Activated naive CD4-positive, alpha-beta T cell treated with anti-CD3 and anti-CD28 coated beads for 36 hours (primary cell): ENCODE measurements at regions of chr3 and their contacts with region 1.

Region 1: DNA sequence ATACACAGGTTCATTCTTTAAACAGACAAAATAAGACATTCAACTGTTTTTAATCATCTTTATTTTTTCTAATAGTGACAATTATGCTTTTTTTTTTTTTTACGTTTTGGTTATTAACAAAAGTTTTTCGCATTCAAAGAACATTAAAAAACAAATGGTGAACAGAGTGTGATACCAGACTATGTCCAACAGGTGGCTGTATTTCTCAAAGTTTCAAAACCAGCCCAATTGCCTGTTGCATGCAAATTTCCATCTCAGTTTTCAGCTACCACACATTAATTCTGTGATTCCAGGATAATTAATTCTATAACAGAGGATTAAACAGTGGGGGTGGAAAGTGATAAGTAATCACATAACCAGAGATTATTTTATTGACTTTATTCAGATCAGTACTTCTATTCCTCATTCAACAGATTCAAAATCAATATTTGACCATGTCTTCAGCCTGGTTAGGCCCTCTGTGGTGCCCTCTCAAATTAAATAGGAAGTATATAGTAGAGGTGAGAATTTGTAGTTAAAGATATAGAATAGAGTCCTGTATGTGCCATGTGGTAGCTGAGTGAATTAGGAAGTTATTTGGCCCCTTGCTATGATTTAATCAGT is 122.2 kb upstream of the DCBLD2 start:
- DNase-seq: no peak
- H3K4me3 Mint-ChIP-seq: no peak overlapping the region
- H3K27ac Mint-ChIP-seq: no peak overlapping the region
- H3K4me1 Mint-ChIP-seq: no peaks in the 10 kb centered on the region
- H3K27me3 Mint-ChIP-seq: no peaks in the 10 kb centered on the region

Region 2: GRCh38 chr3:99172736-99173657 is 149.3 kb after region 1 on chr3:
- CTCF ChIA-PET with region 1: interaction called, 5 read pairs
- intact Hi-C with region 1: loop called (anchors 1 kb)
- DNase-seq: peak; percentile 59
- H3K4me3 Mint-ChIP-seq: no peak overlapping the region
- H3K27ac Mint-ChIP-seq: no peak overlapping the region
- H3K4me1 Mint-ChIP-seq: no peaks in the 10 kb centered on the region
- H3K27me3 Mint-ChIP-seq: peaks cover 2% of the 10 kb centered on the region

Region 3: DNA sequence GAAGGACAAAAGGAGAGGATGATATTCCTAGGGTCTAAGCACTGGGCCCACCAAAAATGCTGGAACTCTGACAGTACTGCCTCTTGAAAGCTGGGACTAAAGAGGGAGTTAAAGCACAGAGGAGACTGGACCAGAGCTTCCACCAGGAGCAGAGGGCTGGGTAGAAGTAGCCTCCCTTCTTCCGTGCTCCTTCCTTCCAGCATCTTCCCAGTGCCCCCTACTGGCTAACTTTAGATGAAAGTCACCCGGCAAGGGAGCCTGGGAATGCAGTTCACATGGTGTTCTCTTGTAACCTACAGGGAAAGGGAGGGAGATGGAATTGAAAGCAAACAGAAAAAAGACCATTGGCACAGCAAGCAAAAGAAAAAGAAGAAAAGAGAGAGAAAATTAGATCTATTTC is 508.6 kb after region 1 on chr3:
- CTCF ChIA-PET with region 1: no interaction called
- intact Hi-C with region 1: loop called (anchors 5 kb)
- DNase-seq: peak; percentile 27
- H3K4me3 Mint-ChIP-seq: no peak overlapping the region
- H3K27ac Mint-ChIP-seq: no peak overlapping the region
- H3K4me1 Mint-ChIP-seq: no peaks in the 10 kb centered on the region
- H3K27me3 Mint-ChIP-seq: peaks cover 3% of the 10 kb centered on the region

Region 4: GRCh38 chr3:99686955-99687612 is 663.4 kb after region 1 on chr3:
- CTCF ChIA-PET with region 1: interaction called, 5 read pairs
- intact Hi-C with region 1: loop called (anchors 1 kb)
- DNase-seq: peak; percentile 71
- H3K4me3 Mint-ChIP-seq: no peak overlapping the region
- H3K27ac Mint-ChIP-seq: no peak overlapping the region
- H3K4me1 Mint-ChIP-seq: no peaks in the 10 kb centered on the region
- H3K27me3 Mint-ChIP-seq: peaks cover 10% of the 10 kb centered on the region

Region 5: GRCh38 chr3:99753268-99753975 is 729.7 kb after region 1 on chr3:
- CTCF ChIA-PET with region 1: interaction called, 6 read pairs
- intact Hi-C with region 1: loop called (anchors 1 kb)
- DNase-seq: peak; percentile 28
- H3K4me3 Mint-ChIP-seq: no peak overlapping the region
- H3K27ac Mint-ChIP-seq: no peak overlapping the region
- H3K4me1 Mint-ChIP-seq: no peaks in the 10 kb centered on the region
- H3K27me3 Mint-ChIP-seq: peaks cover 4% of the 10 kb centered on the region

Region 6: GRCh38 chr3:99789011-99789721 is 765.5 kb after region 1 on chr3:
- CTCF ChIA-PET with region 1: no interaction called
- intact Hi-C with region 1: loop called (anchors 1 kb)
- DNase-seq: peak; percentile 29
- H3K4me3 Mint-ChIP-seq: no peak overlapping the region
- H3K27ac Mint-ChIP-seq: no peak overlapping the region
- H3K4me1 Mint-ChIP-seq: no peaks in the 10 kb centered on the region
- H3K27me3 Mint-ChIP-seq: no peaks in the 10 kb centered on the region